CD8-positive, alpha-beta memory T cell (primary cell): ENCODE measurements at regions of chr15 and their contacts with region 1.

Region 1: GRCh38 chr15:90362936-90363212 is 10.8 kb downstream of the ZNF774 start:
- DNase-seq: no peak
- H3K4me3 ChIP-seq: no peak overlapping the region
- H3K4me3 Mint-ChIP-seq: no peak overlapping the region
- H3K27ac ChIP-seq: no peak overlapping the region
- H3K27ac Mint-ChIP-seq: peak overlapping the region in 4 of 8 donors; percentile 1 to 29 (median 14)
- H3K4me1 ChIP-seq: peaks cover 9% of the 10 kb centered on the region
- H3K4me1 Mint-ChIP-seq: peaks cover 15 to 24% (median 22%) of the 10 kb centered on the region in 3 donors
- H3K27me3 ChIP-seq: no peaks in the 10 kb centered on the region
- H3K27me3 Mint-ChIP-seq: no peaks in the 10 kb centered on the region

Region 2: DNA sequence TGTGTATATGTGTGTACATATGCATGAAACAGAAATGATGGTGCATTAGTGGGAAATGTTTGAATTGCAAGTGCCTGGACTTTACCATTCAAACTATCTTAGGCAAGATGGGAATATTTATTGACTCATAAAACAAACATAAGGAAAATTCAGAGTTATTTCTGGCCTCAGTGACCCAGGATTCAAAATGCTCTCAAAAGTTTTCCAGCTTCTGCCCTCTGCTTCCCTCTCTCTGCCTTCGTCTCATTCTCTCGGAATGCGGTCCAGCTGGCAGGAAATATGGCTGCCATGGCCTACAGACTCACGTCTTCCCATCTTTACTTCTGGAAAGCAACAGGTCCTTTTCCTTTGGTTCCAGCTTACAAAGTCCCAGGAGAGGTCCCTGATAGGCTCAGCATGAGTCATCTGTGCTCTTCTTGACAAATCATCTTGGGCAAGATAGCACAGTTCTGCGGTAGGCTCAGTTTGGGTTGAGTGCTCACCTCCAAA is 19.5 kb before region 1 on chr15:
- CTCF ChIA-PET with region 1: no interaction called
- POLR2A ChIA-PET with region 1: no interaction called
- DNase-seq: no peak
- H3K4me3 ChIP-seq: no peak overlapping the region
- H3K4me3 Mint-ChIP-seq: no peak overlapping the region
- H3K27ac ChIP-seq: no peak overlapping the region
- H3K27ac Mint-ChIP-seq: peak overlapping the region in 1 of 8 donors; percentile 43
- H3K4me1 ChIP-seq: peaks cover 12% of the 10 kb centered on the region
- H3K4me1 Mint-ChIP-seq: peaks cover 6 to 9% (median 6%) of the 10 kb centered on the region in 3 donors
- H3K27me3 ChIP-seq: no peaks in the 10 kb centered on the region
- H3K27me3 Mint-ChIP-seq: peaks cover 0 to 2% of the 10 kb centered on the region in 2 donors

Region 3: DNA sequence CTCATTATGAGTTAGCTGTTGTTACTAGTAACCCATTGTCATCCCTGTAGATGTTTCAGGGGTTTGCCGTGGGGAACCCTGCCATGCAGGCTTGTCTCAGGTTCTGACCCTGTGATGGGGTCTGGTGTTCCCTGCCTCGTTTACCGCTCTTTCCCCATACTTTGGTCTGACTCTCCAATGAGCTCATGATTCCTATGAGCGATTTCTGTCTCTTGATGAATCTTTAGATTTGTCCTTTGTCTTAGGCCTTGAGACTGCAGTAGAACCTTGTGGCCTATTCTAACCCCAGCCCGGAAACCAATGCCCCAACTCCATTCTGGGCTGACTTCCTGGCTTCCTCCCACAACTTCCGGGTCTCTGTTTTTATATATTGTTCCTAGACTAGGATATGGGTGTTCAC is 13.9 kb after region 1 on chr15:
- CTCF ChIA-PET with region 1: interaction called, 15 read pairs
- POLR2A ChIA-PET with region 1: interaction called, 4 read pairs
- DNase-seq: peak; percentile 56 to 81 (median 74)
- H3K4me3 ChIP-seq: peak overlapping the region; percentile 19
- H3K4me3 Mint-ChIP-seq: peak overlapping the region; percentile 0 to 84 (median 72)
- H3K27ac ChIP-seq: no peak overlapping the region
- H3K27ac Mint-ChIP-seq: peak overlapping the region; percentile 4 to 89 (median 70)
- H3K4me1 ChIP-seq: peaks cover 35% of the 10 kb centered on the region
- H3K4me1 Mint-ChIP-seq: peaks cover 39 to 52% (median 48%) of the 10 kb centered on the region in 3 donors
- H3K27me3 ChIP-seq: no peaks in the 10 kb centered on the region
- H3K27me3 Mint-ChIP-seq: no peaks in the 10 kb centered on the region

Region 4: GRCh38 chr15:90387537-90388461 is 24.9 kb after region 1 on chr15 and contains the start of gene IQGAP1:
- CTCF ChIA-PET with region 1: interaction called, 22 read pairs
- POLR2A ChIA-PET with region 1: interaction called, 7 read pairs
- DNase-seq: peak; percentile 92 to 97 (median 94)
- H3K4me3 ChIP-seq: peak within 1 kb of the TSS; percentile 87
- H3K4me3 Mint-ChIP-seq: peak within 1 kb of the TSS; percentile 86 to 96 (median 91)
- H3K27ac ChIP-seq: peak within 1 kb of the TSS; percentile 94
- H3K27ac Mint-ChIP-seq: peak within 1 kb of the TSS; percentile 86 to 97 (median 96)
- H3K4me1 ChIP-seq: peaks cover 38% of the 10 kb centered on the region
- H3K4me1 Mint-ChIP-seq: peaks cover 45 to 59% (median 49%) of the 10 kb centered on the region in 3 donors
- H3K27me3 ChIP-seq: no peaks in the 10 kb centered on the region
- H3K27me3 Mint-ChIP-seq: no peaks in the 10 kb centered on the region
- total RNA-seq, gene IQGAP1: 173 to 176 TPM

Region 5: GRCh38 chr15:90482124-90483011 is 119.5 kb after region 1 on chr15:
- CTCF ChIA-PET with region 1: interaction called, 53 read pairs
- POLR2A ChIA-PET with region 1: interaction called, 5 read pairs
- DNase-seq: peak; percentile 6 to 51 (median 18)
- H3K4me3 ChIP-seq: no peak overlapping the region
- H3K4me3 Mint-ChIP-seq: no peak overlapping the region
- H3K27ac ChIP-seq: no peak overlapping the region
- H3K27ac Mint-ChIP-seq: peak overlapping the region in 4 of 8 donors; percentile 6 to 60 (median 44)
- H3K4me1 ChIP-seq: peaks cover 14% of the 10 kb centered on the region
- H3K4me1 Mint-ChIP-seq: peaks cover 31 to 44% (median 40%) of the 10 kb centered on the region in 3 donors
- H3K27me3 ChIP-seq: no peaks in the 10 kb centered on the region
- H3K27me3 Mint-ChIP-seq: peaks cover 0 to 2% of the 10 kb centered on the region in 2 donors